OCI-LY7 (cell line): ENCODE measurements at regions of chr19 and their contacts with region 1.

Region 1: GRCh38 chr19:29927944-29928625 is 14.0 kb upstream of the URI1 start:
- DNase-seq: peak; percentile 55
- H3K4me3 ChIP-seq: peak overlapping the region; percentile 22
- H3K27ac ChIP-seq: no peak overlapping the region
- H3K4me1 ChIP-seq: peaks cover 44% of the 10 kb centered on the region
- CTCF ChIP-seq: no peak

Region 2: DNA sequence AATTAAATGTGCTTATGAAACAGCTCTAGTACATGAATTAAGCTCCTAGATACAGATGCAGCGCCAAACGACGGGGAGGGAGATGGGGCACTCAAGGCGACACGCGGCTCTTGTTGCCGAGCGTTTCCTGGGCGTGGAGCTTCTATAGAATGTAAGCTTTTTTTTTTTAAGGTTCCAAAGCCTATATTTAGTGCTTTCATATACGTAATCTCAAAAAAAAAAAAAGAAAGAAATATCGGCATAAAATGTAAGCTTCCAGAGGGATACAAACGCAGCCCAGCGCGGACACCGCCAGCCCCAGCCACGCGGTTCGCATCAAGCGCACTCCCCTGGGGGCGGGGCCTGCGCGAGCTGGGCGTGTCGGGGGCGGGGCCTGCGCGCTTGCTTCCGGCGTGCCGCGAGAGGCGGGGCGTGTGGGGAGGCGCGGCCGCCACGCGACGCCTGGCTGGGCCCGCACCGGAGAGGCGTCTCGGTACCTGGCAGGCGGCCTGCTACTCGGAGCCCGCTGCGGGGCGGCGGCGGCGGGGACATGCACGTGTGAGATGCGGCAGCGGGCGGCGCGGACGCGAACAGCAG is 13.8 kb after region 1 on chr19 and contains the start of gene URI1:
- CTCF ChIA-PET with region 1: interaction called, 5 read pairs
- POLR2A ChIA-PET with region 1: interaction called, 11 read pairs
- intact Hi-C with region 1: no loop called
- DNase-seq: peak; percentile 86
- H3K4me3 ChIP-seq: peak within 1 kb of the TSS; percentile 78
- H3K27ac ChIP-seq: peak within 1 kb of the TSS; percentile 47
- H3K4me1 ChIP-seq: peaks cover 37% of the 10 kb centered on the region
- CTCF ChIP-seq: no peak
- total RNA-seq, gene URI1: 45.1 and 68.7 TPM in 2 replicates

Region 3: DNA sequence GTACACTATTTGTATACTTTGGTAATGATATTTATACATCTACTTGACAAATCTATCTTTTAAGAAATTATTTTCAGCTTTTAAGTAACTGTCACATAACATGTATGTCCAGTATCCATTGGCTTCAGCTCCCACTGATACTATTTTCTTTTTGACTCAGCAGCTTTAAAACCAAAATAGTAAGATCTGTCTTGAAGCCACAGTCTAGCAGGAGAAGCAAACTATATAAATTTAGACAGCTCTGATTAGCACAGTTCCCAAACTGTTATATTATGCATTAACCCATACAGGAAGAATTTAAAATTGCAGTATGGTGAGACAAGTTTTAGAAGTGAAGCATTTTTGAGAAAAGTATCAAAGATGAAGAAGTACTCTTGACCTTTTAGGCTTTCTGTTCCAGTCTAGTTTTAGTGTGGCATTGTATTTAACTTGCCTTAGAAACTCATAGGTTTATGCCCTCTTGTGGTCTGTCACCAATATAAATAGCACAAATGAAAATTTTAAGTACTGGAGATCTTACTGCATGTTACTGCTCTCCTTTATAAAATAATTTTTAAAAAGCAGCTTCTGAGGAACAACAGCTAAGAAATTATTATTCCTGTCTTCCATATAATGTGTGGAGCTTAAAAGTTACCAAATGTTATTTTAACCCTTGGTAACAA is 38.6 kb after region 1 on chr19:
- CTCF ChIA-PET with region 1: interaction called, 6 read pairs
- POLR2A ChIA-PET with region 1: interaction called, 3 read pairs
- intact Hi-C with region 1: loop called (anchors 1 kb)
- DNase-seq: peak; percentile 34
- H3K4me3 ChIP-seq: no peak overlapping the region
- H3K27ac ChIP-seq: no peak overlapping the region
- H3K4me1 ChIP-seq: peaks cover 14% of the 10 kb centered on the region
- CTCF ChIP-seq: peak; percentile 81

Region 4: DNA sequence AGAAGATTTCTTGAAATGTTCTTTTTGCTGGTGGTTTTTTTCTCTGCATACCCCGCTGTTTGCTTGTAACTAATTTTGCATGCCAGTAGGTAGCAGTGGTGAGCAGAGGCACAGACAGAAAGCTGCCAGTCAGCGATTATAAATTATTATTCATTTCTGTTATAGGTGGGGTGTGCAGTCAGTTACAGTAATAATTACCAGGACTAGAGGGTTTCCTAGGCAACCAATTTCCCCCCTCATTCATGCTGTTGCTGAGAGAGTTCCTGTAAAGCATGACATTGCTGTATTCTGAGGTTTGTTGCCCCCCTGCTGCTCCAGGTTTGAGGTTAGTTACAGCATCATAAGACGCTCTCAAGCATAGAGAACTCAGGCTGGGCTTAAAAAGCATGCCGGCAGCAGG is 118.4 kb after region 1 on chr19:
- CTCF ChIA-PET with region 1: no interaction called
- POLR2A ChIA-PET with region 1: no interaction called
- intact Hi-C with region 1: loop called (anchors 10 kb)
- DNase-seq: peak; percentile 26
- H3K4me3 ChIP-seq: no peak overlapping the region
- H3K27ac ChIP-seq: no peak overlapping the region
- H3K4me1 ChIP-seq: peaks cover 7% of the 10 kb centered on the region
- CTCF ChIP-seq: peak; percentile 79

Region 5: DNA sequence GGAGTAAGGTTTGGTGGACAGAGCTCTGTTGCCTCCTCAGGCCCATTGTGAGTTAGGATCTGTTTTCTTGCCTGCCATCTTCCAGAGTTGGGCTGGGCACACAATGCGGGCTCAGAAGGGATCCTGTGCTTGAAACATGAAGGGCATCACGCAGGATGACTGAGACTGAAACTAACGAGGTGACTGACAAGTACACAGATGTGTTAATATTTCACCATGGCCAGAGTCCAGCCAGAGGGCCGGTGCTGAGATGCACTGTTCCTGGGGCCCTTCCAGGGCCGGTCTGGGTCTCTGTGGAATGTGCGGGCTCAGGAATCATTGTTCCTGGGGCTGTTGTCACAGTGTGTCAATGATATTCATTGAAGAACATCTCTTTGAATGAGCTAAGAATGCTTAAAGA is 177.6 kb after region 1 on chr19:
- CTCF ChIA-PET with region 1: no interaction called
- POLR2A ChIA-PET with region 1: no interaction called
- intact Hi-C with region 1: no loop called
- DNase-seq: no peak
- H3K4me3 ChIP-seq: no peak overlapping the region
- H3K27ac ChIP-seq: no peak overlapping the region
- H3K4me1 ChIP-seq: no peaks in the 10 kb centered on the region
- CTCF ChIP-seq: no peak

Region 6: DNA sequence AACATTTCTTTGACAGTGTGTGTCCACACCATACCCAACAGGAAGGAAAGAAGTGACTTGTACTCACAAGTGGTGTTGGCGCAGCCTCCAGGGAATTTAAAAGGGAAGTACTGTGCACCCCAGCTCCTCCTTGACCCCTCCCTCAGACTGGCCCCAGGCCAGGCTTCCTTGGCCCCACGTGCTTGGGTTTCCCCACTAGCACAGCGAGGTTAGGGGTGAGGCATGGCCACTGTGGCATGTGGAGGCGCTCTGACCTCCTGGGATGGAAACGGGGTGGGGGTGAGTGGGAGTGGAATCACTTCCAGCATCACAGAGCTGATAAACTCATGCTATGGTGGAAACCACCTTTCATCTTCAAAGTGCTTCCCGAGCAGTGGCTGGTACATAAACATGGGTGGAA is 612.7 kb after region 1 on chr19:
- CTCF ChIA-PET with region 1: no interaction called
- POLR2A ChIA-PET with region 1: no interaction called
- intact Hi-C with region 1: loop called (anchors 5 kb)
- DNase-seq: peak; percentile 54
- H3K4me3 ChIP-seq: peak overlapping the region; percentile 31
- H3K27ac ChIP-seq: peak overlapping the region; percentile 68
- H3K4me1 ChIP-seq: peaks cover 40% of the 10 kb centered on the region
- CTCF ChIP-seq: no peak